ENCODE measurements at regions of chr17 and their contacts with region 1.

Region 1: DNA sequence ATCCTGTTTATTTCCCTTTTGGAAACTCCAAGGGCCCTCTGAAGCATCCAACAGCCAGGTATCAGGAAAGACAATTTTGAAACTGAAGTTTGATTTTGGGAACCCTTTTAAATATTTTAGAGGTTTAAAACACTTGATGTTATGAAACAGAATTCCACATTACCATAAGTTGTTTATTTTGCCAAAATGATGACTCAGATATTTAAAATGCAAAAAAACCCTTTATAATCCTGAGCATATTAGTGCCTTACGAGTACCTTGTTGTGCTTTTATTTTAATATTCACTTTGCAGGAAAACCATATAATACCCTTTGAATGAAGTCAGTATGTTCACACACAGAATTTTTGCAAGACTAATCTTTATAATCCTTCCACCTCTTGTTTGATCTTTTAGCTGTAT is 765.1 kb upstream of the CA10 start:
- DNase-seq: no peak
- ATAC-seq: no peak
- H3K4me3 ChIP-seq: no peak overlapping the region
- H3K27ac ChIP-seq: no peak overlapping the region
- H3K4me1 ChIP-seq: no peaks in the 10 kb centered on the region
- H3K27me3 ChIP-seq: no peaks in the 10 kb centered on the region
- CTCF ChIP-seq: no peak

Region 2: GRCh38 chr17:52136166-52136565 is 787.5 kb before region 1 on chr17:
- intact Hi-C with region 1: loop called in 1 of 10 experiments (anchors 10 kb)
- DNase-seq: no peak
- ATAC-seq: no peak
- H3K4me3 ChIP-seq: no peak overlapping the region
- H3K27ac ChIP-seq: no peak overlapping the region
- H3K4me1 ChIP-seq: no peaks in the 10 kb centered on the region
- H3K27me3 ChIP-seq: peaks cover 0 to 11% (median 0%) of the 10 kb centered on the region in 7 donors
- CTCF ChIP-seq: no peak

Region 3: GRCh38 chr17:52827526-52827925 is 96.1 kb before region 1 on chr17:
- intact Hi-C with region 1: no loop called
- DNase-seq: no peak
- ATAC-seq: no peak
- H3K4me3 ChIP-seq: no peak overlapping the region
- H3K27ac ChIP-seq: no peak overlapping the region
- H3K4me1 ChIP-seq: peaks cover 0 to 13% (median 0%) of the 10 kb centered on the region in 9 donors
- H3K27me3 ChIP-seq: no peaks in the 10 kb centered on the region
- CTCF ChIP-seq: no peak

Region 4: GRCh38 chr17:52965856-52966255 is 42.2 kb after region 1 on chr17:
- intact Hi-C with region 1: no loop called
- DNase-seq: no peak
- ATAC-seq: no peak
- H3K4me3 ChIP-seq: no peak overlapping the region
- H3K27ac ChIP-seq: no peak overlapping the region
- H3K4me1 ChIP-seq: no peaks in the 10 kb centered on the region
- H3K27me3 ChIP-seq: no peaks in the 10 kb centered on the region
- CTCF ChIP-seq: no peak

Region 5: GRCh38 chr17:53032861-53033271 is 109.2 kb after region 1 on chr17:
- intact Hi-C with region 1: no loop called
- DNase-seq: peak in 1 of 2 donors; percentile 11
- ATAC-seq: peak in 1 of 8 donors; percentile 2
- H3K4me3 ChIP-seq: no peak overlapping the region
- H3K27ac ChIP-seq: no peak overlapping the region
- H3K4me1 ChIP-seq: no peaks in the 10 kb centered on the region
- H3K27me3 ChIP-seq: no peaks in the 10 kb centered on the region
- CTCF ChIP-seq: peak in 6 of 9 donors; percentile 23 to 43 (median 32)